ENCODE measurements at regions of chr11 and their contacts with region 1.

Region 1: DNA sequence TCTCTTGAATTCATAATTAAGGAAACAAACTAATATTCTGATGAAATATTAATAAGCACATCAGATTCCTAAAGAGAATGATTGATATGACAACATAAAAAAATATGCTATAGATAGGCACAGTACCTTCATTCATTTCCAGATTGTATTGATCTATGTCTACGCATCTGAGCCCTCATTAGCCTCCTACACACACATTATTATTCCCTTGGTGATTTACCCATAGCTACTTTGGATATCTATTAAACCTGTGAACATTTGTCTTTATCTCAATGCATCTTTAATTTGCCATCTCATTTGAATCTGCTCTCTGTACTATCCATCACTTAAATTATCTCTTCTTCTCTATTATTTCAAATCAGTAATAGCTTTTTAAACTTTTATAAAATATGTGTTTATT is 18.4 kb downstream of the SESN3 start:
- DNase-seq: no peak
- H3K4me3 ChIP-seq: no peak overlapping the region
- H3K27ac ChIP-seq: no peak overlapping the region
- H3K4me1 ChIP-seq: peaks cover 2% of the 10 kb centered on the region
- H3K27me3 ChIP-seq: no peaks in the 10 kb centered on the region
- CTCF ChIP-seq: no peak
- EP300 ChIP-seq: no peak
- POLR2A ChIP-seq: no peak

Region 2: GRCh38 chr11:95163106-95163505 is 49.5 kb before region 1 on chr11:
- intact Hi-C with region 1: loop called in 1 of 4 experiments (anchors 10 kb)
- DNase-seq: no peak
- H3K4me3 ChIP-seq: no peak overlapping the region
- H3K27ac ChIP-seq: no peak overlapping the region
- H3K4me1 ChIP-seq: peaks cover 1% of the 10 kb centered on the region
- H3K27me3 ChIP-seq: no peaks in the 10 kb centered on the region
- CTCF ChIP-seq: no peak
- EP300 ChIP-seq: no peak
- POLR2A ChIP-seq: no peak

Measured in ovary (tissue), 10 donors.